ENCODE measurements at regions of chrX and their contacts with region 1.

Region 1: GRCh38 chrX:14029425-14030173 is at the start of gene GEMIN8:
- DNase-seq: peak; percentile 76
- ATAC-seq: peak; percentile 91
- H3K4me3 Mint-ChIP-seq: peak within 1 kb of the TSS; percentile 94
- H3K27ac Mint-ChIP-seq: peak within 1 kb of the TSS; percentile 97
- H3K4me1 Mint-ChIP-seq: peaks cover 30% of the 10 kb centered on the region
- H3K27me3 Mint-ChIP-seq: no peaks in the 10 kb centered on the region
- CTCF ChIP-seq: no peak
- total RNA-seq, gene GEMIN8: 19.3 and 19.9 TPM in 2 replicates

Region 2: DNA sequence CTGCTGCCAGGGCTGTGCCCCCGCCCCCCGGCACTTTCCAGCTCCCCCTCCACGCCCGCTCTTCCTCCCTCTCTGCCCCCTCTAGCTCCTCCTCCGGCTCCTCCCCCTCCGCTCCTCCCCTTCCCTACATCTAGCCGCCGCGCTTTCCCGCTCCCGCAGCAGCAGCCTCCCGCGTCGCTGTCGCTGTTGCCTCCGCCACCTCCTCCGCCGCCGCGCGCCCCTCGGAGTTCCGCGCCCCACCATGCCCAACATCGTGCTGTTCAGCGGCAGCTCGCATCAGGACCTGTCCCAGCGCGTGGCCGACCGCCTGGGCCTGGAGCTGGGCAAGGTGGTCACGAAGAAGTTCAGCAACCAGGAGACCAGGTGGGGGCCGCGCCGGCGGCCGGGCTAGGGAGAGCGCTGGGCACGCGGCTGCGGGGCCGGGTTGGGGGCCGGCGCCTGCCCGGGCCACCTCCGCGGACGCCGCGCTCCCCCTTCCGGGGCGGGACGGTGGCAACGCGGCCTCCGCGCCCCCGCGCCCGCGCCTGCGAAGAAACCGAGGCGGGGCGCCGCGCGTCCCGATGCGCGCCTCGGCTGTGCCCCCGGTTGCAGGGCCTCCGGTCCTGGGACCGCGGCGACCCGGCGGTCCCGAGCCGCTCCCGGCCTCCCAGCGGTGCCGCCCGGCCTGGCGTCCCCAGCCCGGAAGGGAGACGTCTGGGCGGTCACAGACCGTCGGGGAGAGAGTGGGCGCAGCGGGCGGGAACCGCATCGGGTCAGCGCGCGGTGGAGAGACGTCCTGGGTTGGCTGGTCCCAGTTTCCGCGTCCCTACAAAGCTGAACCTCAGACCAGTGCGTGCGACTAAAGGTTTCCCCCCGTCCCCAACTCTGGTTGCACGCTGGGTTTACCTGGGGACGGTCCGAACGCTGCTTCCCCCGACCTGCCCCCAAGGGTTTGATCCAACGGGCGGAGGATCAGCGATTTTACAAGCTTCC is 1238.1 kb before region 1 on chrX and contains the start of gene PRPS2:
- CTCF ChIA-PET with region 1: no interaction called
- POLR2A ChIA-PET with region 1: interaction called, 3 read pairs
- intact Hi-C with region 1: loop called (anchors 5 kb)
- DNase-seq: peak; percentile 59
- ATAC-seq: peak; percentile 92
- H3K4me3 Mint-ChIP-seq: peak within 1 kb of the TSS; percentile 86
- H3K27ac Mint-ChIP-seq: peak within 1 kb of the TSS; percentile 76
- H3K4me1 Mint-ChIP-seq: peaks cover 23% of the 10 kb centered on the region
- H3K27me3 Mint-ChIP-seq: no peaks in the 10 kb centered on the region
- CTCF ChIP-seq: no peak
- total RNA-seq, gene PRPS2: 33.9 and 37.7 TPM in 2 replicates

Region 3: GRCh38 chrX:13506574-13506973 is 523.0 kb before region 1 on chrX:
- CTCF ChIA-PET with region 1: interaction called, 72 read pairs
- POLR2A ChIA-PET with region 1: interaction called, 6 read pairs
- intact Hi-C with region 1: loop called (anchors 1 kb)
- DNase-seq: peak; percentile 15
- ATAC-seq: no peak
- H3K4me3 Mint-ChIP-seq: no peak overlapping the region
- H3K27ac Mint-ChIP-seq: no peak overlapping the region
- H3K4me1 Mint-ChIP-seq: no peaks in the 10 kb centered on the region
- H3K27me3 Mint-ChIP-seq: no peaks in the 10 kb centered on the region
- CTCF ChIP-seq: no peak

Region 4: GRCh38 chrX:13569479-13570260 is 459.9 kb before region 1 on chrX and contains the start of gene EGFL6:
- CTCF ChIA-PET with region 1: no interaction called
- POLR2A ChIA-PET with region 1: no interaction called
- intact Hi-C with region 1: no loop called
- DNase-seq: no peak
- ATAC-seq: no peak
- H3K4me3 Mint-ChIP-seq: no peak within 1 kb of the TSS
- H3K27ac Mint-ChIP-seq: no peak within 1 kb of the TSS
- H3K4me1 Mint-ChIP-seq: peaks cover 2% of the 10 kb centered on the region
- H3K27me3 Mint-ChIP-seq: peaks cover 19% of the 10 kb centered on the region
- CTCF ChIP-seq: no peak
- total RNA-seq, gene EGFL6: not detected in 2 replicates

Region 5: GRCh38 chrX:13721819-13722519 is 307.6 kb before region 1 on chrX:
- CTCF ChIA-PET with region 1: no interaction called
- POLR2A ChIA-PET with region 1: interaction called, 10 read pairs
- intact Hi-C with region 1: no loop called
- DNase-seq: no peak
- ATAC-seq: peak; percentile 14
- H3K4me3 Mint-ChIP-seq: no peak overlapping the region
- H3K27ac Mint-ChIP-seq: peak overlapping the region; percentile 41
- H3K4me1 Mint-ChIP-seq: peaks cover 21% of the 10 kb centered on the region
- H3K27me3 Mint-ChIP-seq: no peaks in the 10 kb centered on the region
- CTCF ChIP-seq: no peak

Region 6: DNA sequence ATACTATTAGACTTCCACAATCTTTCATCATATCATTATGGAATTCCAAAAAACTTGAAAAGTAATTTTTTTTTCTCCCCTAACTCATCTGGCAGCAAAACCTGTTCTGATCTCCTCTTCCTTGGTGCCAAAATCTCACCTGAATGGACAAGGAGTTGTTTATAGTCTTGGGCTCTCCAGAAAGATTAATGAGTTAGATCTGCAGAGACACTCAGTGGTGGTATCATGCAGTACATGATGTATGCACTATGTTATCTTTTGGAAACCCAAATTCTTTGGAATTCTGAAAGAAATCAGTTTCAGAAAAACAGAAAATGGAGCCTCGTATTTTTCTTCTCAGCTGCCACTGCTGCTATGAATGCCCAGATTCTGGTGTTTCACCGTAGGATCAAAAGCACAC is 224.4 kb before region 1 on chrX:
- CTCF ChIA-PET with region 1: no interaction called
- POLR2A ChIA-PET with region 1: no interaction called
- intact Hi-C with region 1: no loop called
- DNase-seq: no peak
- ATAC-seq: no peak
- H3K4me3 Mint-ChIP-seq: no peak overlapping the region
- H3K27ac Mint-ChIP-seq: no peak overlapping the region
- H3K4me1 Mint-ChIP-seq: no peaks in the 10 kb centered on the region
- H3K27me3 Mint-ChIP-seq: no peaks in the 10 kb centered on the region
- CTCF ChIP-seq: no peak

Region 7: DNA sequence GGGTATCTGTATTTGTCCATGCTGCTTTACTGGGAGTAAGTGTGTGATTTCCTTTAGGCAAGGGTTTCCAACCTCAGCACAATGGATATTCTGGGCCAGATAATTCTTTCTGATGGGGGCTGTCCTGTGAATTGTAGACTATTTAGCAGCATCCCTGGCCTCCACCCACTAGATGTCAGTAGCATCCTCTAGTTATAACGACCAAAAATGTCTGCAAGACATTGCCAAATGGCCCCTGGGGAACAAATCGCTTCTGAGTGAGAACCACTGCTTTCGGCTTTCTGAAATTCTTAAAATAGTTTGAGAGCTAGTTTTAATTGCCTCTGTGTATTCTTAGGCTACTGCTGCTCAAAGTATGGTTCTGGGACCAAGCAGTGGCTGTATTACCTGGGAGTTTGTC is 131.5 kb before region 1 on chrX:
- CTCF ChIA-PET with region 1: no interaction called
- POLR2A ChIA-PET with region 1: no interaction called
- intact Hi-C with region 1: loop called (anchors 1 kb)
- DNase-seq: no peak
- ATAC-seq: no peak
- H3K4me3 Mint-ChIP-seq: no peak overlapping the region
- H3K27ac Mint-ChIP-seq: no peak overlapping the region
- H3K4me1 Mint-ChIP-seq: no peaks in the 10 kb centered on the region
- H3K27me3 Mint-ChIP-seq: no peaks in the 10 kb centered on the region
- CTCF ChIP-seq: no peak

Region 8: GRCh38 chrX:14235004-14235403 is 205.4 kb after region 1 on chrX:
- CTCF ChIA-PET with region 1: no interaction called
- POLR2A ChIA-PET with region 1: no interaction called
- intact Hi-C with region 1: no loop called
- DNase-seq: no peak
- ATAC-seq: no peak
- H3K4me3 Mint-ChIP-seq: no peak overlapping the region
- H3K27ac Mint-ChIP-seq: no peak overlapping the region
- H3K4me1 Mint-ChIP-seq: no peaks in the 10 kb centered on the region
- H3K27me3 Mint-ChIP-seq: peaks cover 2% of the 10 kb centered on the region
- CTCF ChIP-seq: no peak

Region 9: DNA sequence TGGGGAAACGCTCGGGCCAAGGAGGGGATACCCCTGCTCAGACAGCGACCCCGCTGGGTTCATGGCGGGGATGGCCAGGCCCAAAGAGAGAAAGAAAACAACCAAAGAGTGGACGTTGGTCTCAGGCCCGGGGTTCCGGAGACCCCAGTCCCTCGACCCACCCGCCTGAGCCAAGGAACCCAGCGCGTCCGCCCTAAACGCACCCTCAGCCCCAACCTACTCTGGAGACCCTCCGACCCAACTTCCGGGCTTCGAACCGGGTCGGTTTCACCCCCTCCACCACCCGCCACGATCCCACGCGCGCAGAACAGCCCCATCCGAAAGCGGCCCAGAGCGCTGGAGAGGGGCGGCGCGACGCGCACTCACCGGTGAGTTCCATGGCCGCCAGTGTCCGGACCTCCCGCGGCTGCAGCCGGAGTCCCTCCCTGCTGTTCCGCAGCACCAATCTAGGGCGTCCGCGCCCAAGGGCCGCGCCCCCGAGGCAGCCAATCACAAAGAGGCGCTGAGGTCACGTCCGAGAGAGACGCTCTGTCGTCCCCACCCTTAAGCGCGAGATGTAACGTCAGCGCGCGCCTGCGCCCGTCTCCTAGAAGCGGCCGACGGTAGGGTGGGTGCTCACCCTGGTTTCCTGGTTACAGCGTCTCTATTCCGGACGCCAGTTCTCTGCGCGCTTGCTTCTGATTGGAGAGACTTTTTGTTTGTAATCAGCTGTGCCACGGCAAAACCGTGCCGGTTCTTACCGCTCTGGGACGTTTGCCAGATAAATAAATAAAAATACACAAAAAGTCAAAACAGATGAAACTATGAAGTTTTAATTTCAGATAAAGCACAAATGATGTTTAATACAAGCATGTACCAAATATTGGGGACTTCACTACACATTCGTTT is 1305.8 kb after region 1 on chrX and contains the start of gene PIGA:
- CTCF ChIA-PET with region 1: no interaction called
- POLR2A ChIA-PET with region 1: no interaction called
- intact Hi-C with region 1: loop called (anchors 1 kb)
- DNase-seq: peak; percentile 77
- ATAC-seq: peak; percentile 94
- H3K4me3 Mint-ChIP-seq: peak within 1 kb of the TSS; percentile 94
- H3K27ac Mint-ChIP-seq: peak within 1 kb of the TSS; percentile 91
- H3K4me1 Mint-ChIP-seq: peaks cover 19% of the 10 kb centered on the region
- H3K27me3 Mint-ChIP-seq: no peaks in the 10 kb centered on the region
- CTCF ChIP-seq: no peak
- total RNA-seq, gene PIGA: 15.7 and 24.9 TPM in 2 replicates